ENCODE measurements at regions of chr5 and their contacts with region 1.

Region 1: GRCh38 chr5:157271740-157272271 is 5.9 kb downstream of the CYFIP2 start:
- DNase-seq: peak; percentile 74
- ATAC-seq: peak; percentile 86
- H3K4me3 Mint-ChIP-seq: peak overlapping the region; percentile 73
- H3K27ac Mint-ChIP-seq: peak overlapping the region; percentile 99
- H3K4me1 Mint-ChIP-seq: peaks cover 93% of the 10 kb centered on the region
- H3K27me3 Mint-ChIP-seq: no peaks in the 10 kb centered on the region
- CTCF ChIP-seq: no peak

Region 2: GRCh38 chr5:157189223-157189622 is 82.6 kb before region 1 on chr5:
- CTCF ChIA-PET with region 1: no interaction called
- POLR2A ChIA-PET with region 1: no interaction called
- intact Hi-C with region 1: no loop called
- DNase-seq: no peak
- ATAC-seq: no peak
- H3K4me3 Mint-ChIP-seq: no peak overlapping the region
- H3K27ac Mint-ChIP-seq: no peak overlapping the region
- H3K4me1 Mint-ChIP-seq: no peaks in the 10 kb centered on the region
- H3K27me3 Mint-ChIP-seq: peaks cover 4% of the 10 kb centered on the region
- CTCF ChIP-seq: no peak

Region 3: GRCh38 chr5:157283434-157283833 is 11.6 kb after region 1 on chr5:
- CTCF ChIA-PET with region 1: interaction called, 6 read pairs
- POLR2A ChIA-PET with region 1: interaction called, 101 read pairs
- intact Hi-C with region 1: loop called (anchors 1 kb)
- DNase-seq: peak; percentile 40
- ATAC-seq: peak; percentile 99
- H3K4me3 Mint-ChIP-seq: peak overlapping the region; percentile 52
- H3K27ac Mint-ChIP-seq: peak overlapping the region; percentile 89
- H3K4me1 Mint-ChIP-seq: peaks cover 70% of the 10 kb centered on the region
- H3K27me3 Mint-ChIP-seq: no peaks in the 10 kb centered on the region
- CTCF ChIP-seq: no peak

Region 4: DNA sequence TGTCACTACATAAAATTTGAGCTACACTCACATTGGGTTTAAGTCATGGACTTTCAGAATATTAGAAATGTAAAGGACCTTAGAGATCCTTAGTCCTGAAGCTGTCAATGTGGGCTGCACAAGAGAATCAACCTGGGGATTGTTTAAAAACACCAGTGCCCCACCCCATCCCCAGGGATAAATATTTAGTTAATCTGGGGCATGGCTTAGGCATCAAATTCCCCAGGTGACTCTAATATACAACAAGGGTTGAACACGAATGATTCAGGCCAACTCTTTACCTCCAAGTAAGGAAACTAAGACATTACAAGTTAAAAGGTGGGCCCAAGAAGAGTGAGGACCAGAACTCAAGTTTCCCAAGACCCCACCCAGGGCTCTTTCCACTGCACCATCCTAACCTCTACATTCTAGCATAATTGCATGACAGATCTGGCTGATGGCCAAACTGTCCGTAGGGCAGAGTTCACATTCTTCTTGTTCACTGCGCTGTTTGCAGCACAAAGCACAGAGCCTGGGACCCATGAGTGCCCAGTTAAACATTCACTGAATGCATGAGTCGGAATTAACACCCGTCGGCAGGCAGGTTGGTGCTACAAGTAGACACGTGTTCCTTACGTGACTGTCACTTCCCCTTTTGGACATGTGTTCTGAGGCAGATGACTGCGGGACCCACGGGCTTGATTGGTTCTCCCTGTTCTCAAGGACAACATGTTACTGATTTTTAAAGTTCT is 19.3 kb after region 1 on chr5:
- CTCF ChIA-PET with region 1: interaction called, 6 read pairs
- POLR2A ChIA-PET with region 1: interaction called, 101 read pairs
- intact Hi-C with region 1: loop called (anchors 1 kb)
- DNase-seq: no peak
- ATAC-seq: peak; percentile 94
- H3K4me3 Mint-ChIP-seq: no peak overlapping the region
- H3K27ac Mint-ChIP-seq: peak overlapping the region; percentile 89
- H3K4me1 Mint-ChIP-seq: peaks cover 48% of the 10 kb centered on the region
- H3K27me3 Mint-ChIP-seq: no peaks in the 10 kb centered on the region
- CTCF ChIP-seq: no peak

Region 5: GRCh38 chr5:157324237-157324636 is 52.4 kb after region 1 on chr5:
- CTCF ChIA-PET with region 1: no interaction called
- POLR2A ChIA-PET with region 1: no interaction called
- intact Hi-C with region 1: no loop called
- DNase-seq: no peak
- ATAC-seq: no peak
- H3K4me3 Mint-ChIP-seq: no peak overlapping the region
- H3K27ac Mint-ChIP-seq: no peak overlapping the region
- H3K4me1 Mint-ChIP-seq: peaks cover 6% of the 10 kb centered on the region
- H3K27me3 Mint-ChIP-seq: no peaks in the 10 kb centered on the region
- CTCF ChIP-seq: no peak